ENCODE measurements at regions of chr12 and their contacts with region 1.

Region 1: GRCh38 chr12:105986779-105987684 is 151.7 kb downstream of the NUAK1 start:
- DNase-seq: no peak
- ATAC-seq: no peak
- H3K4me3 ChIP-seq: no peak overlapping the region
- H3K27ac ChIP-seq: no peak overlapping the region
- H3K4me1 ChIP-seq: peaks cover 0 to 11% (median 9%) of the 10 kb centered on the region in 9 donors
- H3K27me3 ChIP-seq: no peaks in the 10 kb centered on the region
- CTCF ChIP-seq: no peak

Region 2: DNA sequence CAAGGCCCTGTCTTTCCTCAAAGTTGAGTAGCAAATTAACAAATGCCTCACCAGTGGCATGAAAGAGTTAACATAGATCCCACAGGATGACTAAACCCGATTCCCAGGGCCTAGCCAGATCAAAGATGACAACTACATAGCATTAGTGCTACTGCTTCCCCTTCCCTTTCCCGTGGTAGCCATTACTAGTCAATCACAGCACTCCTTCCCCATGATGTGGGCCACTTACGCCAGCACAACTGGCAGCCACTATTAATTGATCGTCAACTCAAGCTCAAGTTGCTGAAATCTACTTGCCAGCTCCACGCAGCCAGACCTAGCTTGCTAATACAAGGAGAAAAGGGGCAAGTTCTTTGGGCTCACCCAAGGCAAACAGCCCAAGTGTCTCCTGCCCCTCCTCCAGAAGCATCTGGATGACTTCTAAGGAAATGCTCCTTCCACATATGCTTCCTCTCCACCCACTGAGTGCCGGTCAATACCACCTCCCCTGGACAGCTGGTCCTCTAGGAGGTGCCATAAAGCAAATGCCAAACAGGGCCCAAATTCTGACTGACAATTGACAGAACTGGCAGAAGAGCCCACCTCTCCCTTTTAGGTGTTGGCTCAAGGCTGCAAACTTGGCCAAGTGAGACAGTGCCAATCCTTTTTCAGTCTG is 79.1 kb after region 1 on chr12:
- intact Hi-C with region 1: loop called in 1 of 10 experiments (anchors 10 kb)
- DNase-seq: no peak
- ATAC-seq: peak in 2 of 8 donors; percentile 23 to 39
- H3K4me3 ChIP-seq: no peak overlapping the region
- H3K27ac ChIP-seq: peak overlapping the region in 9 of 10 donors; percentile 33 to 82 (median 51)
- H3K4me1 ChIP-seq: peaks cover 0 to 63% (median 36%) of the 10 kb centered on the region in 9 donors
- H3K27me3 ChIP-seq: no peaks in the 10 kb centered on the region
- CTCF ChIP-seq: no peak

Measured in heart right ventricle (tissue), 16 donors.